ENCODE measurements at regions of chr4 and their contacts with region 1.

Region 1: GRCh38 chr4:118989098-118990080 is 100.7 kb downstream of the SYNPO2 start:
- DNase-seq: no peak

Region 2: DNA sequence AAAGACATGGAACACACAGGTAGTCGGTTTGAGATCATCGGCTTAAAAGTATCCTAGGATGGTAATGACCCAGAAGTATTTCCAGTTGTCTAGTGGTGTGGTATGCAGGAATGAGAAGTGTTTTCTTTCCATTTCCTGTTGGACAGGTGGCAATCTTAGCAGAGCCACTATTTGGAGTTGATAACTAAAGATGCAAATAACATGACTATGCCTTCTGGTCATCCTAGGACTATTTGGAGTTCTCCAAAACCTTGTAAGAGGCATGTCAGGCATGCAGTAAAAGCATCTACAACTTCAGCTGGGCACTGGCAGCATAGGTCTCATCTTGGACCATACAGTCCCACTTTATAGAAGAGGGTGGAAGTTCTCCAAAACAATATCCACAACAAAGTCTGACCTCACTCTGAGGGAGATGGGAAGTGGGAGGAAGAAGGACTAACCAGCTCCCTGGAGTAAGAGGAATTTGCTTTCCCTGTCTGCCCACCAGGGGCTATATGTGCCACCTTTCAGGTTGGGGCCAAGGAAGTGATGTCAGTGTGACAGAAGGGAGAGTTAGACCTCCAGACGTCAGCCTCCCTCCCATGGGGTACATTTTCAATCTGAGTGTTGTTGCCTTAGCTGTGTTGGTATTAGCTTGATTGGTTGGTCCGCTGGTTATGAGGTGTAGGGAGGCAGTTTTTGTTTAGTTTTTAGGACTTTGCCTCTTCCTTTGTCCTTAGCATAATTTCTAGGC is 45.1 kb after region 1 on chr4:
- intact Hi-C with region 1: loop called in 1 of 2 experiments (anchors 5 kb)
- DNase-seq: no peak

Measured in posterior vena cava (tissue), 2 donors.